A549 (cell line): ENCODE measurements at regions of chr16 and their contacts with region 1.

Region 1: DNA sequence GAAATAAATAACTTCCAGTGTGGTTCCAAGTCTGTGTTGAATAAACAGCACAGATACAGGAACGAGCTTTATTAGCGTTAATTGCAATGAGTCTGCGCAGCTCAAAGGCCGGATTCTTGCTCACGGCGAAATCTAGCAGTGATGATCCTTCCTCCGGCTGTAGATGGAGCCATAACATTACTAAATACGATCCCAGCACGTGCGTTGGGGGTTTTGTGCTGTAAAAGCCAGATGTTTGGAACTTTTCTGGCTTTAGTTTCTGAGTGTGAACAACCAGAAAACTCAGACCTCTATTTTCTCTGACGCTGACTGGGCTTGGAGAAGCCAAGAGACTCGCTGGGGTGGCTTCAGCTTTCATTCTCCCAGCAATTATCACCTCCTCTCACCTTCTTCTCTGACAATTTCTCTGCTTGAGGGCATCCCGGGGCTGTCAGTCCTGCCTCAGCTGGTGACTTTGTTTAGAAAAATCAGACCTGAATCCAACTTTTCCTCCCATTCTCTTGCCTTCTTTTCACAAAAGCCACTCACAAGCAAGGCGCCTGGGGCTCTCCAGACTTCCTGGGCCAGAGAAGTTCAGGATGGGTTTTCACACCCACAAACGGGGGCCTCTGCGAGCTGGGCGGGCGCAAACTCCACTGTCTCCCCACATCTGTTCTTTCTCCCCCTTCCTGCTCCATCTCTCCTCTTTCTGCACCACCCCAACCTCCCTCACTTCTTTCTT is 47.1 kb upstream of the AKTIP start:
- DNase-seq: peak; percentile 61 to 71
- ATAC-seq: peak; percentile 62 to 90; a peak in 5 of 6 replicates
- H3K4me3 ChIP-seq: no peak overlapping the region
- H3K27ac ChIP-seq: peak overlapping the region; percentile 2 to 28; a peak in 2 of 6 replicates
- H3K4me1 ChIP-seq: peaks cover 5% of the 10 kb centered on the region; the same call in 1 of the 3 replicates
- CTCF ChIP-seq: peak; percentile 79
- EP300 ChIP-seq: no peak
- POLR2A ChIP-seq: no peak
- RAD21 ChIP-seq: peak; percentile 85 to 90

Region 2: GRCh38 chr16:53489755-53490154 is 60.4 kb before region 1 on chr16:
- CTCF ChIA-PET with region 1: no interaction called
- POLR2A ChIA-PET with region 1: no interaction called
- DNase-seq: no peak
- ATAC-seq: no peak
- H3K4me3 ChIP-seq: no peak overlapping the region
- H3K27ac ChIP-seq: no peak overlapping the region
- H3K4me1 ChIP-seq: no peaks in the 10 kb centered on the region
- CTCF ChIP-seq: no peak
- EP300 ChIP-seq: no peak
- POLR2A ChIP-seq: no peak
- RAD21 ChIP-seq: no peak

Region 3: DNA sequence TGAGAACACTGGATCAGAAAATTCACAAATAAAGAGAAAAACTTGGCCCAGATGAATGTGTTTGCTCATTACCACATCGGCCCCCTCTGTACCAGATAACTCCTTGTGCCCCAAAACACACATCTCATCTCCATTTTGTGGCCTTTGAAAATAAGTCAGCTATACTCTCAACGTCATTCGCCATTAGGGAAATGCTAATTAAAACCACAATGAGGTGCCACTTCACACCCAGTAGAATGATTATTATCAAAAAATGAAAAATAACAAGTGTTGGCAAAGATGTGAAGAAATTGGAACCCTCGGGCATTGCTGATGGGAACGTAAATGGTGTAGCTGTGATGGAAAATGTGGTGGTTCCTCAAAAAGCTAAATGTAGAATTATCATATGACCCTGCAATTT is 12.5 kb before region 1 on chr16:
- CTCF ChIA-PET with region 1: interaction called, 20 read pairs
- POLR2A ChIA-PET with region 1: no interaction called
- DNase-seq: no peak
- ATAC-seq: no peak
- H3K4me3 ChIP-seq: no peak overlapping the region
- H3K27ac ChIP-seq: no peak overlapping the region
- H3K4me1 ChIP-seq: no peaks in the 10 kb centered on the region
- CTCF ChIP-seq: no peak
- EP300 ChIP-seq: no peak
- POLR2A ChIP-seq: no peak
- RAD21 ChIP-seq: no peak